ENCODE measurements at regions of chr16 and their contacts with region 1.

Region 1: GRCh38 chr16:75432828-75433731 is at the start of gene CFDP1:
- DNase-seq: peak; percentile 96
- H3K4me3 Mint-ChIP-seq: peak within 1 kb of the TSS; percentile 81
- H3K27ac Mint-ChIP-seq: peak within 1 kb of the TSS; percentile 93
- H3K4me1 Mint-ChIP-seq: peaks cover 30% of the 10 kb centered on the region
- H3K27me3 Mint-ChIP-seq: no peaks in the 10 kb centered on the region
- total RNA-seq, gene CFDP1: 37.2 to 44.1 TPM

Region 2: DNA sequence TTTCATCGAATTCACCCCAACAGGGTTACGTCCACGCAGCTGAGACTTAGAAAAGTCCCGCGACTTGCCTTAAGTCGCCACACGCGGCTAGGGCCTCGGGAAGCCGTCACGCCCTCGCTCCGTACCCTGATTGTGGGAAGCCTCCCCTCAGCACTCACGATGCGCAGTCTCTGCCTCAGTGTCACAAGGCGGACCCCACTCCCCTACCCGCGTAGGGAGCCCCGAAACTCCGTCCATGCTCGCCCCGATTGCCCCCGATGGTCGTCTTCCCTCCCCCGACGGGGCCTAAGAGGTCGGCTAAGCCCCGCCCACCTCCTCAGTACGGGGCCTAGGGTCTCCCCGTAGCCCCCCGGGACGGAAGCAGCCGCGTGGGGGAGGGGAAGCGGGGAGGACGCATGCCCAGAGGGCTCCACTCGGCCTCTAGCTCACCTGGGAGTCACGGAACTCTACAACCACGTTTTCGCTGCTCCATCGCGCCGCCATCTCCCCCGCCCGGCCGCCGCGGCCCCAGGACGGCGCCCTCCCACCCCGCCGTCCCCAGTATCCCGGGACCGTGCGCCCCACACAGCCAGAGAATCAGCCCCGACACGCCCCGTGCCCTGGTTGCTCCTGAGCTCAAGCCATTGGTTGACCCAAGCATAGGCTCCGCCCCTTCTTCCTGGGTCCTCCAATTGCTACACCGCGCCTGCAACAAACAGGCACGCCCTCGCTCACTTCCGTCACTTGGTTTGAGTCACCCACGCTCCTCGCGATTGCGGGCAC is 448.4 kb before region 1 on chr16 and contains the start of gene WDR59:
- CTCF ChIA-PET with region 1: no interaction called
- intact Hi-C with region 1: loop called (anchors 1 kb)
- DNase-seq: peak; percentile 100
- H3K4me3 Mint-ChIP-seq: peak within 1 kb of the TSS; percentile 88
- H3K27ac Mint-ChIP-seq: peak within 1 kb of the TSS; percentile 73
- H3K4me1 Mint-ChIP-seq: peaks cover 16% of the 10 kb centered on the region
- H3K27me3 Mint-ChIP-seq: no peaks in the 10 kb centered on the region
- total RNA-seq, gene WDR59: 47.8 to 55.6 TPM

Region 3: GRCh38 chr16:75379911-75380847 is 52.9 kb before region 1 on chr16:
- CTCF ChIA-PET with region 1: no interaction called
- intact Hi-C with region 1: loop called (anchors 2 kb)
- DNase-seq: peak; percentile 53
- H3K4me3 Mint-ChIP-seq: no peak overlapping the region
- H3K27ac Mint-ChIP-seq: no peak overlapping the region
- H3K4me1 Mint-ChIP-seq: peaks cover 51% of the 10 kb centered on the region
- H3K27me3 Mint-ChIP-seq: peaks cover 2% of the 10 kb centered on the region

Region 4: GRCh38 chr16:75413951-75414350 is 19.1 kb before region 1 on chr16:
- CTCF ChIA-PET with region 1: no interaction called
- intact Hi-C with region 1: no loop called
- DNase-seq: no peak
- H3K4me3 Mint-ChIP-seq: no peak overlapping the region
- H3K27ac Mint-ChIP-seq: no peak overlapping the region
- H3K4me1 Mint-ChIP-seq: peaks cover 27% of the 10 kb centered on the region
- H3K27me3 Mint-ChIP-seq: no peaks in the 10 kb centered on the region

Region 5: GRCh38 chr16:75566040-75566810 is 133.1 kb after region 1 on chr16 and contains the start of gene GABARAPL2:
- CTCF ChIA-PET with region 1: no interaction called
- intact Hi-C with region 1: loop called (anchors 1 kb)
- DNase-seq: peak; percentile 89
- H3K4me3 Mint-ChIP-seq: peak within 1 kb of the TSS; percentile 98
- H3K27ac Mint-ChIP-seq: peak within 1 kb of the TSS; percentile 94
- H3K4me1 Mint-ChIP-seq: peaks cover 38% of the 10 kb centered on the region
- H3K27me3 Mint-ChIP-seq: peaks cover 3% of the 10 kb centered on the region
- total RNA-seq, gene GABARAPL2: 63.3 to 66.8 TPM

Region 6: DNA sequence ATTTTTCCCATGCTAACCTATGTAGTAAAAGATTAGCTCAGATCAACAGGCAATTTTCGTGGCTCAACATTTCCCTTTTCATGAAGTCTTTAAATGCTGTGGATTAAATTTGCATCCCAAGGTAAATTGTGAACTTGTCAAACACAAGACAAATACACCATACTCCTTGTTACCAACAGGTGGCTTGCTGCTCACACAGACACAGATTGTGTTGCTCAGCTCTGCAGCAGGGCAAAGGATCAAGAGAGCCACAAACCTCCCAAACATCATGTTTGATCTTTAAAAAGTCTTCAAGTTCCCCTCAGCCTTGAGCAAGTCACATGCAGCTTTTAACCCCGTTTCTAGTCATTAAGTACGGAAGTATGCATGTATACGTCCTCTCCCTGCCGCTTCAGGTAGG is 724.5 kb after region 1 on chr16:
- CTCF ChIA-PET with region 1: no interaction called
- intact Hi-C with region 1: no loop called
- DNase-seq: no peak
- H3K4me3 Mint-ChIP-seq: no peak overlapping the region
- H3K27ac Mint-ChIP-seq: no peak overlapping the region
- H3K4me1 Mint-ChIP-seq: no peaks in the 10 kb centered on the region
- H3K27me3 Mint-ChIP-seq: no peaks in the 10 kb centered on the region

Region 7: GRCh38 chr16:77190478-77191258 is 1757.6 kb after region 1 on chr16 and contains the start of gene MON1B:
- CTCF ChIA-PET with region 1: no interaction called
- intact Hi-C with region 1: loop called (anchors 1 kb)
- DNase-seq: peak; percentile 96
- H3K4me3 Mint-ChIP-seq: peak within 1 kb of the TSS; percentile 82
- H3K27ac Mint-ChIP-seq: peak within 1 kb of the TSS; percentile 99
- H3K4me1 Mint-ChIP-seq: peaks cover 29% of the 10 kb centered on the region
- H3K27me3 Mint-ChIP-seq: no peaks in the 10 kb centered on the region
- total RNA-seq, gene MON1B: 69.6 to 71.0 TPM